Pancreas (tissue), 10 donors: ENCODE measurements at regions of chr10 and their contacts with region 1.

Region 1: GRCh38 chr10:28545967-28546644 is 13.2 kb downstream of the WAC start:
- DNase-seq: no peak
- ATAC-seq: no peak
- H3K4me3 ChIP-seq: no peak overlapping the region
- H3K27ac ChIP-seq: no peak overlapping the region
- H3K4me1 ChIP-seq: peaks cover 15 to 44% (median 20%) of the 10 kb centered on the region in 3 donors
- H3K27me3 ChIP-seq: no peaks in the 10 kb centered on the region
- CTCF ChIP-seq: no peak

Region 2: DNA sequence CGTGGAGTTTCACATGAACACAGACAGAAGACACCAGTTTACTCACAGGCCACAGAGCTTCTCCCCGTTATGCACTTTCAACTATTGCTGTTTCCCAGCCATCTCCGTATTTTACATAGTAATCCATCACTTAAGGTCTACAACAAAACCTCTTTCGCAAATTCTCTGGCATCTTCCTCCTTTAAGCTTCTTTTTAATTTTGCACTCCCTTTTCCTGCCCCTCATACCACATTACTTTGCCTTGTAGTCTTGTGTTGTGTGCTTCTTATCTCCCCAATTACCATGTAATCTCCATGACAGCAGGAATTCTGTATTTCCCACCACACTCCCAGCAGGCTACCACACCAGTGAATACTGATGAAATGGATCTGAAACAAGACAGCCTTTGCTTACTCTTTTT is 634.6 kb before region 1 on chr10:
- intact Hi-C with region 1: no loop called
- DNase-seq: no peak
- ATAC-seq: no peak
- H3K4me3 ChIP-seq: no peak overlapping the region
- H3K27ac ChIP-seq: no peak overlapping the region
- H3K4me1 ChIP-seq: no peaks in the 10 kb centered on the region
- H3K27me3 ChIP-seq: no peaks in the 10 kb centered on the region
- CTCF ChIP-seq: no peak

Region 3: DNA sequence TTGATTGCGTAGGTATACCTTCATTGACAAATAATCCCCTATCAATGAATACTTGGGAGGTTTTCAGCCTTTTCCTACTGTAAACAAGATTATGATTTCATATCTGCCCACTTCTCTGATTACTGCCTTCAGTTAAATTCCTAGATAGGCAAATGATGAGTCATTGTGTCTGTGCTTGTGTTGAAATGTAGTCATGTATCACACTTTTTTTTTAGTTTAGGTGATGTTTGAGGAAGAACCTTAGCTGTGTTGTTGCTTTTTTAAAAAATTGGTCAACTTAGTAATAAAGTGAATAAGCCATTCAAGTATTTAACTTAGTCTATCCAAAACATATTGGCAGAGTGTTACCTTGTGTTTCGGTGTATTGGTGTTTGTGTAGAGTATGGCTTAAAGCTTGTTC is 46.8 kb after region 1 on chr10:
- intact Hi-C with region 1: loop called in 1 of 3 experiments (anchors 10 kb)
- DNase-seq: no peak
- ATAC-seq: peak in 3 of 4 donors; percentile 46 to 62 (median 52)
- H3K4me3 ChIP-seq: no peak overlapping the region
- H3K27ac ChIP-seq: no peak overlapping the region
- H3K4me1 ChIP-seq: peaks cover 12 to 29% (median 20%) of the 10 kb centered on the region in 3 donors
- H3K27me3 ChIP-seq: no peaks in the 10 kb centered on the region
- CTCF ChIP-seq: no peak

Region 4: DNA sequence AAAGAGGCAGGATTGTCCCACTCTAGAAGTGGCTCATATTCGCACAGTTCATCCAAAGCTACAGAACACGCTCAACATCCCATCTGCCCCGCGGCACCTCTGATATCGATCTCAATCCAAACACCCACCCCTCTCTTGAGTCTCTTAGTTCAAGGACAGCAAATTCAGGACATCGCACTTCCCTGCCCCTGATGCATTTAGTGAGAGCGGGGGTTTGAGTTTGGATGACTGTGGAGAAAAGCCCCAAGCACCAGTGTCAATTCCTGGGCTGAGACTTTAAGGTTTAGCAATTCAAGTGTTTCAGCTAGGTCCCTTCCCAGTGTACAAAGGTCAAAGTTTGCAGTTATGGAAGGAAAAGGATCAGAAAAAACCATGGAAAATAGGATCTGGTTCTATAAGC is 909.0 kb after region 1 on chr10:
- intact Hi-C with region 1: no loop called
- DNase-seq: no peak
- ATAC-seq: no peak
- H3K4me3 ChIP-seq: no peak overlapping the region
- H3K27ac ChIP-seq: no peak overlapping the region
- H3K4me1 ChIP-seq: no peaks in the 10 kb centered on the region
- H3K27me3 ChIP-seq: no peaks in the 10 kb centered on the region
- CTCF ChIP-seq: no peak